ENCODE measurements at regions of chr11 and their contacts with region 1.

Region 1: DNA sequence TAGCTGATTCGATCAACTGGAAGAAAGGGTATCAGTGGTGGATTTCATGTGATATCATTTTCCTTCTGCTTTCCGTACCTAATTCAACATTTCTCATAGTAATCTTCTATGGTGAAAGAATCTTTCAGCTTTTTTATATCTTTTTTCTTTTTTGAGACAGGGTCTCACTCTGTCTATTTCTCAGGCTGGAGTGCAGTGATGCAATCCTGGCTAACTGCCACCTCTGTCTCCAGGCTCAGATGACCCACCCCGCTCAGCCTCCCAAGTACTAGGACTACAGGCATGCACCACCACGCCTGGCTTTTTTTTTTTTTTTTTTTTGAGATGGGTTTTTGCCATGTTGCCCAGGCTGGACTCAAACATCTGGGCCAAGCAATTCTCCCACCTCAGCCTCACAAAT is 18.6 kb upstream of the CHORDC1 start:
- DNase-seq: no peak
- H3K4me3 ChIP-seq: no peak overlapping the region
- H3K4me3 Mint-ChIP-seq: no peak overlapping the region
- H3K27ac ChIP-seq: no peak overlapping the region
- H3K27ac Mint-ChIP-seq: no peak overlapping the region
- H3K4me1 ChIP-seq: peaks cover 7% of the 10 kb centered on the region
- H3K4me1 Mint-ChIP-seq: peaks cover 5 to 19% (median 8%) of the 10 kb centered on the region in 4 donors
- H3K27me3 ChIP-seq: no peaks in the 10 kb centered on the region
- H3K27me3 Mint-ChIP-seq: peaks cover 3 to 11% of the 10 kb centered on the region in 2 donors

Region 2: DNA sequence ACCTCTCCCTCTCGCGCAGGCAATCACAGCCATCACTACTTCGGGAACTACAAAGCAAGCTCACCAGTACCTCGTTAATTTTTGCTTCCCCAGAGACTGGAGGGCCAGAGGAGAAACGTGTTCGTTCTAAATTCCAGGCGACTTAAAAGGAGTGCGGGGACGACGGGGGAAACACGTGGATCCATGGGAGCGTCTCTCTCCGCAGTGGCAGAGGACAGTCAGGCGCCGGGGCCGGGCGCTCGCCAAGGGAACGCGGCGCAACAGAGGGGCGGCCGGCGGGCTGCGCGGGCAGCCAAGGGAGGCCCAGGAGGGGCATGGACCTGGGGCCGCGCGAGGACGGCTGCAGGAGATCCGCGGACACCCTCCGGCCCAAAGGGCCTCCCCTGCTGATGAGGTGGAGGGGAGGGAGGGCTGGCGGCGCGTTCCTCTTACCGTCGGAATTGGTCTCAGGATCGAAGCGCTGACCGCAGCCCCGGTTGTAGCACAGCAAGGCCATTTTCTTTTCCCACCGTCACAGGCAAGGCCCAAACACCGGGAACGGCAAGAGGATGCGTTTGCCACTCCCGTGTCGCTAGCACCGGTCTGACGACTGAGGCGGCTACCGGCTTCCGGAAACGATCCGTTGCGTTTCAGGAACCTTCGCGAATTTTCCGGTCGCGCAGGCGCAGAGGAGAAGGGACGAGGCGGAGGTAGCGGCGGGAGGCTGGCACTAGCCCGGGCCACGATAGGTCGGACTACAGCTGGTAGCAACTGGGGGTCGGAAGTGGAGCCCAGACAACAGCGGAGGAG is 18.8 kb before region 1 on chr11 and contains the start of gene CHORDC1:
- CTCF ChIA-PET with region 1: interaction called, 5 read pairs
- POLR2A ChIA-PET with region 1: interaction called, 5 read pairs
- intact Hi-C with region 1: loop called (anchors 2 kb)
- DNase-seq: peak; percentile 88 to 92 (median 89)
- H3K4me3 ChIP-seq: peak within 1 kb of the TSS; percentile 95 to 99
- H3K4me3 Mint-ChIP-seq: peak within 1 kb of the TSS; percentile 96 to 99 (median 98)
- H3K27ac ChIP-seq: peak within 1 kb of the TSS; percentile 88
- H3K27ac Mint-ChIP-seq: peak within 1 kb of the TSS; percentile 88 to 99 (median 97)
- H3K4me1 ChIP-seq: peaks cover 51% of the 10 kb centered on the region
- H3K4me1 Mint-ChIP-seq: peaks cover 44 to 62% (median 52%) of the 10 kb centered on the region in 4 donors
- H3K27me3 ChIP-seq: no peaks in the 10 kb centered on the region
- H3K27me3 Mint-ChIP-seq: no peaks in the 10 kb centered on the region
- total RNA-seq, gene CHORDC1: 70.2 to 78.4 TPM

Region 3: DNA sequence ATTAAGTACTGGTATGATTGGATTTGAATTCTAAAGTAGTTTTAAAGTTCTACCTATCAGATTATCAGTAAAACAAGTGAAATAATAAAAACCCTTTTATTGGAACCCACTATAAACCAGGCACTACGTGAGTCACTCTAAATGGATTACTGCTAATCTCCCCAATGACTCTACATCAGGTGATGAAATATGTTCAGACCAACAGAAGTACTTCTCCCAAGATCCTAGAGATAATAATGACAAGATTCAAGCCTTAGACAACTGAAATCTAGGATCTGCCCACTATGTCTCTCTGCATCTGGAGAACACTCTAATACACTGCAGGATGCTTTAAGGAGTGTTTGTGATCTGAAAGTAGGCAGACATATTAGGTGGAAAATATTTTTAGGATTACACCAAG is 633.6 kb after region 1 on chr11:
- CTCF ChIA-PET with region 1: no interaction called
- POLR2A ChIA-PET with region 1: no interaction called
- intact Hi-C with region 1: no loop called
- DNase-seq: no peak
- H3K4me3 ChIP-seq: no peak overlapping the region
- H3K4me3 Mint-ChIP-seq: no peak overlapping the region
- H3K27ac ChIP-seq: no peak overlapping the region
- H3K27ac Mint-ChIP-seq: no peak overlapping the region
- H3K4me1 ChIP-seq: no peaks in the 10 kb centered on the region
- H3K4me1 Mint-ChIP-seq: no peaks in the 10 kb centered on the region
- H3K27me3 ChIP-seq: no peaks in the 10 kb centered on the region
- H3K27me3 Mint-ChIP-seq: no peaks in the 10 kb centered on the region